ENCODE measurements at regions of chr11 and their contacts with region 1.

Region 1: GRCh38 chr11:123357961-123358841 is 71.9 kb upstream of the GRAMD1B start:
- DNase-seq: peak; percentile 68
- ATAC-seq: peak; percentile 77
- H3K4me3 Mint-ChIP-seq: peak overlapping the region; percentile 74
- H3K27ac Mint-ChIP-seq: peak overlapping the region; percentile 84
- H3K4me1 Mint-ChIP-seq: peaks cover 32% of the 10 kb centered on the region
- H3K27me3 Mint-ChIP-seq: peaks cover 55% of the 10 kb centered on the region
- CTCF ChIP-seq: peak; percentile 9

Region 2: GRCh38 chr11:123110356-123110755 is 247.8 kb before region 1 on chr11:
- CTCF ChIA-PET with region 1: no interaction called
- POLR2A ChIA-PET with region 1: no interaction called
- intact Hi-C with region 1: no loop called
- DNase-seq: no peak
- ATAC-seq: no peak
- H3K4me3 Mint-ChIP-seq: no peak overlapping the region
- H3K27ac Mint-ChIP-seq: peak overlapping the region; percentile 63
- H3K4me1 Mint-ChIP-seq: peaks cover 3% of the 10 kb centered on the region
- H3K27me3 Mint-ChIP-seq: no peaks in the 10 kb centered on the region
- CTCF ChIP-seq: no peak

Region 3: GRCh38 chr11:123235117-123235655 is 123.0 kb before region 1 on chr11:
- CTCF ChIA-PET with region 1: no interaction called
- POLR2A ChIA-PET with region 1: no interaction called
- intact Hi-C with region 1: no loop called
- DNase-seq: peak; percentile 60
- ATAC-seq: no peak
- H3K4me3 Mint-ChIP-seq: no peak overlapping the region
- H3K27ac Mint-ChIP-seq: no peak overlapping the region
- H3K4me1 Mint-ChIP-seq: peaks cover 16% of the 10 kb centered on the region
- H3K27me3 Mint-ChIP-seq: no peaks in the 10 kb centered on the region
- CTCF ChIP-seq: no peak

Region 4: DNA sequence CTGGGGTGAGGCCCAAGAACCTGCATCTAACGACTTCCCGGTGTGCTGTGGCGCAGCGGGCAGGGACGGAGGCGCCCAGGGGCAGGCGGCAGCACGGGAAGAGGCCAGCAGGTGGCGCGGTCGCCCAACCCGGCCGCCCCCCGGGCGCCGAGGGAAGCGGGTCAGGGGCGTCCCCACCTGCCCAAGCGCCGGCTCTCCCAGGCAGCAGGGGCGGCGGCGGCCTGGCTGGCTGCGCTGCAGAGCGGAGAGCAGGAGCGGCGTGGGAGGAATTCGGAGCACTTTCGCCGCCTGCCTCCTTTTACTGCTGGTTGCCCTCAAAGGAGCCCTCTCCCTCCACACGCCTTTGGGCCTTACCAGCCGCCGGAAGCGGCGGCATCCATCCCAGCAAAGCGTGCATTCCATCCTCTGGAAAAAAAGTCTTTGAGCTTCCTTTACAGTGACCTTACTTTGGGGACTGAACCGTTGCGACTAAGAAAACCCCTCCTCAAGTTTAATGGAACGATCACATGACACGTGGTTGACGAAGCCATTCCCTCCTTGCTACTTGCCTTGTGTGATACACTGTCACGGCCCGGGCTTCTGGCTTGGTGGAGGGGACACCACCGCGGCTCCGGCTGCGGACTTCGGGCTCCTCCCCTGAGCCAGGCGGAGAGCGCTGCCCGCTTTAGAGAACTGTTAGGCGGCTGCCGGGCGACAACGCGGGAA is 56.4 kb before region 1 on chr11:
- CTCF ChIA-PET with region 1: interaction called, 33 read pairs
- POLR2A ChIA-PET with region 1: no interaction called
- intact Hi-C with region 1: loop called (anchors 1 kb)
- DNase-seq: peak; percentile 80
- ATAC-seq: peak; percentile 80
- H3K4me3 Mint-ChIP-seq: peak overlapping the region; percentile 12
- H3K27ac Mint-ChIP-seq: peak overlapping the region; percentile 77
- H3K4me1 Mint-ChIP-seq: peaks cover 37% of the 10 kb centered on the region
- H3K27me3 Mint-ChIP-seq: peaks cover 18% of the 10 kb centered on the region
- CTCF ChIP-seq: peak; percentile 87

Region 5: DNA sequence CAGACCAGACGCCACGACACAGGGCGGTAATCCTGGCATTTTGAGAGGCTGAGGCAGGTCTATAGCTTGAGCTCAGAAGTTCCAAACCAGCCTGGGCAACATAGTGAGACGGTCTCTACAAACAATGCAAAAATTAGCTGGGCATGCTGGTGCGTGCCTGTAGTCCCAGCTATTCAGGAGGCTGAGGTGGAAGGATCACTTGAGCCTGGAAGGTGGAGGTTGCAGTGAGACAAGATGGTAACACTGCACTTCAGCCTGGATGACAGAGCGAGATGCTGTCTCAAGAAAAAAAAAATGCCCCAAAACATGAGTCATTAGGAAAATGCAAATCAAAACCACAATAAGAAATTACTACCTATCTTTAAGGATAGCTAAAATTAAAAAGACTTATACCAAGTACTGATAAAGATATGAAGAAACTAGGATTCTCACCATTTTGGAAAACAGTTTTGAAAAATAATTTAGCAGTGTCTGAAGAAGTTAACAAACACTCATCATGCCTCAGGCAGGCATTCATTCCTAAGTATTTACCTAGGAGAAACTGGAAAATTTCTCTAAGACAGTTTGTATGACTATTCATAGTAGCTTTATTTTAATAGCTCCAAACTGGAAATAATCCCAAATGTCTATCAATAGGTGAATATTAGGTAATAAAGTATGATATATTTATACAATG is 19.7 kb before region 1 on chr11:
- CTCF ChIA-PET with region 1: interaction called, 12 read pairs
- POLR2A ChIA-PET with region 1: interaction called, 4 read pairs
- intact Hi-C with region 1: no loop called
- DNase-seq: no peak
- ATAC-seq: peak; percentile 69
- H3K4me3 Mint-ChIP-seq: no peak overlapping the region
- H3K27ac Mint-ChIP-seq: no peak overlapping the region
- H3K4me1 Mint-ChIP-seq: peaks cover 7% of the 10 kb centered on the region
- H3K27me3 Mint-ChIP-seq: peaks cover 17% of the 10 kb centered on the region
- CTCF ChIP-seq: no peak

Region 6: GRCh38 chr11:123373754-123374621 is 15.8 kb after region 1 on chr11:
- CTCF ChIA-PET with region 1: interaction called, 12 read pairs
- POLR2A ChIA-PET with region 1: interaction called, 4 read pairs
- intact Hi-C with region 1: no loop called
- DNase-seq: no peak
- ATAC-seq: peak; percentile 17
- H3K4me3 Mint-ChIP-seq: no peak overlapping the region
- H3K27ac Mint-ChIP-seq: no peak overlapping the region
- H3K4me1 Mint-ChIP-seq: peaks cover 2% of the 10 kb centered on the region
- H3K27me3 Mint-ChIP-seq: peaks cover 11% of the 10 kb centered on the region
- CTCF ChIP-seq: no peak

Region 7: DNA sequence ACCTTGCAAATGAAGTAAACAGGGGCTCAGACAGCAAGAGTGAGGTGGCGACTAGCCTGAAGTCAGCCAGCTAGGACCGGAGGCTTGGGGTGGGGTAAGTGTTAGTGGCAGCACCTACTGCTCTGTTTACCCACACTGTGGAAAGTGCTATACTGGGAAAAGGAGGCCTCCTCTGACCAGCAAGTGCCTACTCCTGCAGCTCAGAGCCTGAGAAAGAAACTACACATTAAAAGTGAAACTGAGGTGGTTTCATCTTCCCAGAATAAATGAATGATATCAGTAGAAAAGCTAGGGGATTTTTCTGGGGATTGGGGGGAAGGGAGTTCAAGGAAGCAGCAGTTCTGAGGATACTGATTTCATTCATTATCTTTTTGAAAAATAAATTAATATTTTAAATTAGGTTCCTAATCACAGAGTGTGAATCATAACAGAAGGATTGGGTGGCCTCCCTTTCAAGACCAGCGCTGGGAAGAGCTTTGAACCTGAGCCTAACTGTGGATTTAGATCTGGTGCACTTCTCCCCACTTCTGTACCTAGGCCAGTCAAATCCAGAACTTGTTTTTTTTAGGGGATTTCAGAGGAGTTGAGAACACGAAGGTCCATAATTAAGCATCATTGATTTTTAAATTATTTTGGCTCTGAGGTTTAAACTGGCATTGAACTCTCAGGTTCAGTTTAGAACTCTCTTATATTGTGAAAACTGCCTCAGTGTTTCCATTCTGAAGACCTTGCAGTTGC is 23.8 kb after region 1 on chr11:
- CTCF ChIA-PET with region 1: interaction called, 16 read pairs
- POLR2A ChIA-PET with region 1: interaction called, 17 read pairs
- intact Hi-C with region 1: loop called (anchors 2 kb)
- DNase-seq: peak; percentile 83
- ATAC-seq: peak; percentile 91
- H3K4me3 Mint-ChIP-seq: peak overlapping the region; percentile 52
- H3K27ac Mint-ChIP-seq: no peak overlapping the region
- H3K4me1 Mint-ChIP-seq: peaks cover 16% of the 10 kb centered on the region
- H3K27me3 Mint-ChIP-seq: peaks cover 3% of the 10 kb centered on the region
- CTCF ChIP-seq: no peak

Region 8: DNA sequence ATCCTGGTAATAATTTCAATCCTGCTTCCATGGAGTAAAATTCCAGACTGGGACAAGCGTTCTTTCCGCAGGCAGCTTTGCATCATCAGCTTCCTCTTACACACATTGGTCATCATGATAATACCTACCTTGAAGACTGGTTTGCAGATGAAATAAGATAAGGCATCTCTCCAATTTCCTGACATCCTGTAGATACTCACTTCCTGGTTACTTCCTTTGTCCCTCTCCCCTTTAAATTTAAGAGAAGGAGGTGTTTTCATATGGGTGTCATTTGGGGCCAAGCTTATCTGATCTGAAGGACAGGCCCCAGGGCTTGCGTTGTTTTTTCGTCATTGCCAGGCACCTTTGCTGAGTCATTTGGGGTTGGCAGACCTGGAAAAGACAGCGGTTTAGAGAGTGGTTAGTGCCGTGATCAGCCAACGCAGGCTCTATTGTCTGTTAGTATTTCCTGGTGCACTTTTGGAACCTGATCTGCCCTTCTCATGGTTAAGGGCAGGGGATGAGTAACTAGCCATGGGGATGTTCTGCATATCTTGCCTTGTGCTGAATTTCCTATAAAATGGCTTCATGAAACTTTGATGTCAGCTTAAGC is 96.0 kb after region 1 on chr11:
- CTCF ChIA-PET with region 1: no interaction called
- POLR2A ChIA-PET with region 1: no interaction called
- intact Hi-C with region 1: loop called (anchors 5 kb)
- DNase-seq: peak; percentile 87
- ATAC-seq: peak; percentile 82
- H3K4me3 Mint-ChIP-seq: peak overlapping the region; percentile 43
- H3K27ac Mint-ChIP-seq: peak overlapping the region; percentile 88
- H3K4me1 Mint-ChIP-seq: peaks cover 57% of the 10 kb centered on the region
- H3K27me3 Mint-ChIP-seq: no peaks in the 10 kb centered on the region
- CTCF ChIP-seq: no peak

Region 9: GRCh38 chr11:123478352-123478987 is 120.3 kb after region 1 on chr11:
- CTCF ChIA-PET with region 1: interaction called, 11 read pairs
- POLR2A ChIA-PET with region 1: no interaction called
- intact Hi-C with region 1: no loop called
- DNase-seq: peak; percentile 25
- ATAC-seq: peak; percentile 35
- H3K4me3 Mint-ChIP-seq: peak overlapping the region; percentile 7
- H3K27ac Mint-ChIP-seq: peak overlapping the region; percentile 14
- H3K4me1 Mint-ChIP-seq: peaks cover 42% of the 10 kb centered on the region
- H3K27me3 Mint-ChIP-seq: no peaks in the 10 kb centered on the region
- CTCF ChIP-seq: peak; percentile 86

Region 10: DNA sequence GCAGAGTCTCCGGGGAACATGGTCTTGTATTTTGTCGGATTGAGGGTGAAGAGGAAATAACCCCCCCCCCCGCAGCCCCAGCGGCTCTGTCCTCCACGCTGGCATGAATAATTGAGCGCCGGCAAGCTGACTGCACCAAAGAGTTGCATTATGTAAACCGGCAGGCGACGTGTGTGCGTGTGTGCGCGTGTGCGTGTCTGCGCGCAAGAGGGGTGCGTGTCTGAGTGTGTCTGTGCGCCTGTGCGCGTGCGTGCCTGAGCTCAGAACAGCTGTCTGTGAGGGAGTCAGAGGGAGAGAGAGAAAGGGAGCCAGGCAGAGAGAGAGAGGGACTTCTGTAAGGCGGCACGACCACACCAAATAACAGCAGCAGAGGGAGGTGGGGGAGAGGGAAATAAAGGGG is 201.8 kb after region 1 on chr11:
- CTCF ChIA-PET with region 1: no interaction called
- POLR2A ChIA-PET with region 1: no interaction called
- intact Hi-C with region 1: no loop called
- DNase-seq: peak; percentile 61
- ATAC-seq: peak; percentile 90
- H3K4me3 Mint-ChIP-seq: peak overlapping the region; percentile 50
- H3K27ac Mint-ChIP-seq: no peak overlapping the region
- H3K4me1 Mint-ChIP-seq: peaks cover 10% of the 10 kb centered on the region
- H3K27me3 Mint-ChIP-seq: peaks cover 3% of the 10 kb centered on the region
- CTCF ChIP-seq: no peak